Activated CD8-positive, alpha-beta T cell treated with anti-CD3 and anti-CD28 coated beads, Interleukin-2, amount 10 ng/mL, durations not matched to agents 7 days and 5 days (primary cell): ENCODE measurements at regions of chr14 and their contacts with region 1.

Region 1: GRCh38 chr14:24058260-24058950 is 6.6 kb downstream of the CARMIL3 start:
- DNase-seq: peak; percentile 81
- ATAC-seq: peak; percentile 75
- H3K4me3 Mint-ChIP-seq: no peak overlapping the region
- H3K27ac Mint-ChIP-seq: peak overlapping the region; percentile 72
- H3K4me1 Mint-ChIP-seq: peaks cover 10% of the 10 kb centered on the region
- H3K27me3 Mint-ChIP-seq: peaks cover 5% of the 10 kb centered on the region

Region 2: DNA sequence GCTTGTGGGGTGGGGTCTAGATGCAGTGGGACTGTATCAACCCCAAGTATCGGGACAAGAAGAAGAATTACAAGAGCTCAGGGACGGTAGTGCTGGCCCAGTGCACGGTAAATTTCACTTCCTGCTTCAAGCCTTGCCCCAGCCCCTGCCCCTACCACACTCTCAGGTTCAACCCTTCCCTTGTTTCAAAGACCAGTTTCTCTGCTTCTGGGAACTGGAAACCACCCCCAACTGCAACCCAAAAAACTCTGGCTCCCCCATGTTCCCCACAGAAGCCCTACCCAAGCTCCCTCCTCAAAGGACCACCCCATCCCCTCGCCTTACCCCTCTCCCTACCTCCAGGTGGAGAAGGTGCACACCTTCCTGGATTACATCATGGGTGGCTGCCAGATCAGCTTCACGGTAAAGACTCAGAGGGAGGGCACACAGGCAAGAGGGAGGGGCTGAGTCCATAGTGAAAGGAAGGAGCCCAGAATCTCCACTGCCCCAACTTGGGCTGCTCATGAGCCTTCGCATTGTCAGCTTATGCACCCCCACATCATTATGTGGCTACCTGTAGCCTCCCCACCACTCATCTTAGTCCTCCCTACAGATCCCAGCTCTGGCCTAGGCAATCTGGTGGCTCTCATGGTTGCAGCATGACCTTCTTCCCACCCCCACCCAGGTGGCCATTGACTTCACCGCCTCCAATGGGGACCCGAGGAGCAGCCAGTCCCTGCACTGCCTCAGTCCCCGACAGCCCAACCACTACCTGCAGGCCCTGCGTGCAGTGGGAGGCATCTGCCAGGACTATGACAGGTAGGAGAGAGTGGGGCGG is 17.3 kb after region 1 on chr14:
- CTCF ChIA-PET with region 1: interaction called, 74 read pairs
- POLR2A ChIA-PET with region 1: interaction called, 5 read pairs
- DNase-seq: peak; percentile 44
- ATAC-seq: peak; percentile 51
- H3K4me3 Mint-ChIP-seq: peak overlapping the region; percentile 41
- H3K27ac Mint-ChIP-seq: peak overlapping the region; percentile 82
- H3K4me1 Mint-ChIP-seq: peaks cover 33% of the 10 kb centered on the region
- H3K27me3 Mint-ChIP-seq: peaks cover 2% of the 10 kb centered on the region

Region 3: DNA sequence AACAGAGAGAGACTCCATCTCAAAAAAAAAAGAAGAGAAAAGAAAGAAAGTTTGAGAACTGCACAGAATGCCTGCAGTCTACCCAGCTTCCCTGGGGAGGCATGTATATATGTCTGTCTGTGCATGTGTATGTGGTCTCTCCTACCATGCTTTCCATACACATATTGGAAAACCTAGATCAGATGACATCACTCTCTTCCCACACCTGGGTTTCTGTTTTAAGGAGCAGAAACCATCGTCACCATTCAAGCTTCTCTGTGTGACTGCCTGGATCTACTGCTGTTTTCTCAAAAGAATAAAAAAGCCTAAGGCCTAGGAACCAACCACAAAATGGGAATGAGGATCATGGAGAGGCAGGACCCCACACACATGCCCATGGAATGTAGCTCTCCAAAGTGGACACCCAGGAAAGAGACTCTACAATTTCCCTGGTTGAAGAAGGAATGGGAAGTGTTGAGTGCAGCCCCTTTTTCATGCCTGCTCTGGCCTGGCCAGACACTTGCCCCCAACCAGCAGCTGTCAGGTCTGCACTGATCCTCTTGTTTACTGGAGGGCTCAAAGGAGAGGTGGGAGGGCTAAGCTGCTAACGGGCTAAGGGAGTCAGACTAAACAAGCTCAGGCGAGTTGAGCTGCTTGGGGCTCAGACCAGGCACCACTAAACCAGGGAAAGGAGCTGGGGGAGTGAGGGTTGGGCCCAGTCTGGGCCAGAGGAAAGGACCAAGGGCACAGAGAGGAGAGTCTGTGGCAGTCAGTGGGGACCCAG is 28.0 kb after region 1 on chr14:
- CTCF ChIA-PET with region 1: interaction called, 213 read pairs
- POLR2A ChIA-PET with region 1: interaction called, 5 read pairs
- DNase-seq: no peak
- ATAC-seq: no peak
- H3K4me3 Mint-ChIP-seq: no peak overlapping the region
- H3K27ac Mint-ChIP-seq: no peak overlapping the region
- H3K4me1 Mint-ChIP-seq: peaks cover 19% of the 10 kb centered on the region
- H3K27me3 Mint-ChIP-seq: no peaks in the 10 kb centered on the region

Region 4: DNA sequence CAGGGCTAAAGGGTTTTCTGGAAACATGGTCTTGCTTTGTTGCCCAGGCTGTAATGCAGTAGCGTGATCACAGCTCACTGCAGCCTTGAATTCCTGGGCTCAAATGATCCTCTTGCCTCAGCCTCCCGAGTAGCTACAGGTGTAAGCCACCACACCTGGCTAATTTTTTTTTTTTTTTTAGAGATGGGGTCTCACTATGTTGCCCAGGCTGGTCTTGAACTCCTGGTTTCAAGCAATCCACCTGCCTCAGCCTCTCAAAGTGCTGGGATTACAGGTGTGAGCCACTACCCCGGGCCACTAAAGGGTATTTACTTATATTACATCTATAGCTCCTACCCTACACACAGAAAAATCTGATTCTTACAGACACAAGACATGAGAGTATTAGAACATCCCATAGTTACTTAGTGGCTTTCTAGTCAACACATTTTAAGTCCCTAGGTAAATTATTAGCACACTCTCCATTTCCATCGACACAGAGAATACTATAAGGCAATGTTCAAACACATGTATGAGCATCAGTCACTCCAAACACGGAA is 50.0 kb after region 1 on chr14:
- CTCF ChIA-PET with region 1: interaction called, 210 read pairs
- POLR2A ChIA-PET with region 1: interaction called, 20 read pairs
- DNase-seq: no peak
- ATAC-seq: no peak
- H3K4me3 Mint-ChIP-seq: no peak overlapping the region
- H3K27ac Mint-ChIP-seq: peak overlapping the region; percentile 97
- H3K4me1 Mint-ChIP-seq: peaks cover 42% of the 10 kb centered on the region
- H3K27me3 Mint-ChIP-seq: no peaks in the 10 kb centered on the region

Region 5: GRCh38 chr14:24146978-24147760 is 88.8 kb after region 1 on chr14 and contains the start of gene RNF31:
- CTCF ChIA-PET with region 1: interaction called, 10 read pairs
- POLR2A ChIA-PET with region 1: no interaction called
- DNase-seq: peak; percentile 100
- ATAC-seq: peak; percentile 87
- H3K4me3 Mint-ChIP-seq: peak within 1 kb of the TSS; percentile 88
- H3K27ac Mint-ChIP-seq: peak within 1 kb of the TSS; percentile 95
- H3K4me1 Mint-ChIP-seq: peaks cover 67% of the 10 kb centered on the region
- H3K27me3 Mint-ChIP-seq: no peaks in the 10 kb centered on the region
- total RNA-seq, gene RNF31: 123 to 142 TPM